ENCODE measurements at regions of chr1 and their contacts with region 1.

Region 1: DNA sequence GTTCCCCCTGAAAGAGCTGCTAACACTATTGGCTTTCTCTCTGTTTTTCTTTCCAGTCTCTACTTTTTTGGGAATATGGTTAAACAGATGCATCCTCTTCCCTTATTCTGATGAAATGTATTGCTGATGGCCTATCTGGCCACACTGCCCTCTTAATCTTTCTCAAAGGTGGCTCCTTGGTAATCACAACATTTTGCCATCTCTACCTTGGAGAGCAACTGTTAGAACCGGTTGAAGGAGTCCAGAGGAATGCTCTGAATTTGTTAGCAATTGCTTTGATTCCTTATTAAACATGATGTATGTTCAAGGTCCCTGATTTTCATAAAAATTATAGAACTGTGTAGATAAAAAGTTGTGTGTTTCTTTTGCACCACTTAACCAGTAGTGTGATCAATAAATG is 50.1 kb upstream of the ARID1A start:
- DNase-seq: no peak
- ATAC-seq: no peak
- H3K4me3 ChIP-seq: no peak overlapping the region
- H3K4me3 Mint-ChIP-seq: no peak overlapping the region
- H3K27ac ChIP-seq: no peak overlapping the region
- H3K27ac Mint-ChIP-seq: no peak overlapping the region
- H3K4me1 ChIP-seq: no peaks in the 10 kb centered on the region
- H3K4me1 Mint-ChIP-seq: no peaks in the 10 kb centered on the region
- H3K27me3 ChIP-seq: no peaks in the 10 kb centered on the region
- H3K27me3 Mint-ChIP-seq: no peaks in the 10 kb centered on the region
- CTCF ChIP-seq: no peak

Region 2: GRCh38 chr1:26145041-26145959 is 500.4 kb before region 1 on chr1:
- CTCF ChIA-PET with region 1: no interaction called
- POLR2A ChIA-PET with region 1: no interaction called
- intact Hi-C with region 1: no loop called
- DNase-seq: peak in 8 of 9 experiments; percentile 62 to 88 (median 81)
- ATAC-seq: peak; percentile 95
- H3K4me3 ChIP-seq: no peak overlapping the region
- H3K4me3 Mint-ChIP-seq: no peak overlapping the region
- H3K27ac ChIP-seq: no peak overlapping the region
- H3K27ac Mint-ChIP-seq: no peak overlapping the region
- H3K4me1 ChIP-seq: peaks cover 6% of the 10 kb centered on the region
- H3K4me1 Mint-ChIP-seq: peaks cover 5% of the 10 kb centered on the region
- H3K27me3 ChIP-seq: no peaks in the 10 kb centered on the region
- H3K27me3 Mint-ChIP-seq: no peaks in the 10 kb centered on the region
- CTCF ChIP-seq: peak; percentile 87

Region 3: GRCh38 chr1:26259578-26259977 is 386.2 kb before region 1 on chr1:
- CTCF ChIA-PET with region 1: no interaction called
- POLR2A ChIA-PET with region 1: no interaction called
- intact Hi-C with region 1: loop called in 1 of 2 experiments (anchors 10 kb)
- DNase-seq: no peak
- ATAC-seq: no peak
- H3K4me3 ChIP-seq: no peak overlapping the region
- H3K4me3 Mint-ChIP-seq: no peak overlapping the region
- H3K27ac ChIP-seq: no peak overlapping the region
- H3K27ac Mint-ChIP-seq: no peak overlapping the region
- H3K4me1 ChIP-seq: no peaks in the 10 kb centered on the region
- H3K4me1 Mint-ChIP-seq: no peaks in the 10 kb centered on the region
- H3K27me3 ChIP-seq: no peaks in the 10 kb centered on the region
- H3K27me3 Mint-ChIP-seq: no peaks in the 10 kb centered on the region
- CTCF ChIP-seq: no peak

Region 4: GRCh38 chr1:26279456-26280332 is 366.0 kb before region 1 on chr1 and contains the start of gene SH3BGRL3:
- CTCF ChIA-PET with region 1: no interaction called
- POLR2A ChIA-PET with region 1: no interaction called
- intact Hi-C with region 1: no loop called
- DNase-seq: peak; percentile 64 to 92 (median 85)
- ATAC-seq: peak; percentile 57
- H3K4me3 ChIP-seq: peak within 1 kb of the TSS; percentile 74 to 93
- H3K4me3 Mint-ChIP-seq: peak within 1 kb of the TSS; percentile 89
- H3K27ac ChIP-seq: peak within 1 kb of the TSS; percentile 69 to 90
- H3K27ac Mint-ChIP-seq: peak within 1 kb of the TSS; percentile 100
- H3K4me1 ChIP-seq: peaks cover 86% of the 10 kb centered on the region
- H3K4me1 Mint-ChIP-seq: peaks cover 86% of the 10 kb centered on the region
- H3K27me3 ChIP-seq: no peaks in the 10 kb centered on the region
- H3K27me3 Mint-ChIP-seq: no peaks in the 10 kb centered on the region
- CTCF ChIP-seq: no peak
- total RNA-seq, gene SH3BGRL3: 187 to 191 TPM

Region 5: GRCh38 chr1:26686795-26687194 is 41.1 kb after region 1 on chr1:
- CTCF ChIA-PET with region 1: interaction called, 3 read pairs
- POLR2A ChIA-PET with region 1: no interaction called
- intact Hi-C with region 1: loop called in 1 of 2 experiments (anchors 1 kb)
- DNase-seq: no peak
- ATAC-seq: no peak
- H3K4me3 ChIP-seq: no peak overlapping the region
- H3K4me3 Mint-ChIP-seq: no peak overlapping the region
- H3K27ac ChIP-seq: no peak overlapping the region
- H3K27ac Mint-ChIP-seq: no peak overlapping the region
- H3K4me1 ChIP-seq: peaks cover 8% of the 10 kb centered on the region
- H3K4me1 Mint-ChIP-seq: peaks cover 13% of the 10 kb centered on the region
- H3K27me3 ChIP-seq: no peaks in the 10 kb centered on the region
- H3K27me3 Mint-ChIP-seq: no peaks in the 10 kb centered on the region
- CTCF ChIP-seq: no peak

Measured in CD8-positive, alpha-beta T cell (primary cell).